Ovary (tissue), 10 donors: ENCODE measurements at regions of chr17 and their contacts with region 1.

Region 1: DNA sequence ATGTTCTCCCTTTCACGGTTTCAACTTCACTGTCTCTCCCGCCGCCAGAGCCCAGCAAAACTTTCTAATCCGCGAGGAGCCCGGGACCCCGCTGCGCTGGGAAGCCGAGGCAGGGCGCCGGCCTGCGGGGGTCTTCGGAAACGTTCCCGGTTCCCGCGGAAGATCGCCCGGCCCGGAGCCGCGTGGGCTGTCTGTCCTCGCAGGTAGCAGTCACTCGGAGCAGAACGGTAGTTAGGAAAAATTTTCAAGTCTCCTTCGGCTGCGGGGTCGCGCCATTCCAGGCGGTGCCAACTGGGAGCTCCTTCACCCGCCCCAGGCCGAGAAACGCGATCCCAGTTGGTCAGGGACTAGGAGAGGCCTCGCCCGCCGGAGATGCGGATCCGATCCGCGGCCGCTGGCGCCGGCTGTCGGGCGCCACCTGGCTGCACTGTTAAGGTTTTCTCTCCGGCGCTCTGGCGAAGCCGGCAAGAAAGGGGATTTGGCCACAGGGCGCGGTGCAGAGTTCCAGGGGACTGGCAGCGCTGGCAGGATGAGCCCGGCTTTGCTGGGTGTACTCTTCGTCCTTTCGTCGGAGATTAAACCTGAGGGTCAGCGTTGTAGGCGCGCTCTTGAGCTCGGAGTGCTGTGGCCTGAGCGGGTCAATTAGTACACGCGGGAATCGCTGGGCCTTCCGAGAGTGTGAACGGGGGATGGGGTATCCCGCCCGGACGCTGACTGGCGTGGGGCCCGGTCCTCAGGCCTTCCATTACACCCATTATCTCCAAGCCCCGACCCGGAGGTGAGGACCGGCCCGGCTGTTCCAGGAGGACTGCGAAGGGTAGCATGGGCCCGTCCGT is 135.4 kb downstream of the KCNJ12 start:
- DNase-seq: peak; percentile 76 to 89 (median 80)
- H3K4me3 ChIP-seq: peak overlapping the region; percentile 45
- H3K27ac ChIP-seq: peak overlapping the region; percentile 26 to 28
- H3K4me1 ChIP-seq: peaks cover 5% of the 10 kb centered on the region
- H3K27me3 ChIP-seq: no peaks in the 10 kb centered on the region
- CTCF ChIP-seq: peak; percentile 49 to 78 (median 64)
- EP300 ChIP-seq: no peak
- POLR2A ChIP-seq: no peak

Region 2: DNA sequence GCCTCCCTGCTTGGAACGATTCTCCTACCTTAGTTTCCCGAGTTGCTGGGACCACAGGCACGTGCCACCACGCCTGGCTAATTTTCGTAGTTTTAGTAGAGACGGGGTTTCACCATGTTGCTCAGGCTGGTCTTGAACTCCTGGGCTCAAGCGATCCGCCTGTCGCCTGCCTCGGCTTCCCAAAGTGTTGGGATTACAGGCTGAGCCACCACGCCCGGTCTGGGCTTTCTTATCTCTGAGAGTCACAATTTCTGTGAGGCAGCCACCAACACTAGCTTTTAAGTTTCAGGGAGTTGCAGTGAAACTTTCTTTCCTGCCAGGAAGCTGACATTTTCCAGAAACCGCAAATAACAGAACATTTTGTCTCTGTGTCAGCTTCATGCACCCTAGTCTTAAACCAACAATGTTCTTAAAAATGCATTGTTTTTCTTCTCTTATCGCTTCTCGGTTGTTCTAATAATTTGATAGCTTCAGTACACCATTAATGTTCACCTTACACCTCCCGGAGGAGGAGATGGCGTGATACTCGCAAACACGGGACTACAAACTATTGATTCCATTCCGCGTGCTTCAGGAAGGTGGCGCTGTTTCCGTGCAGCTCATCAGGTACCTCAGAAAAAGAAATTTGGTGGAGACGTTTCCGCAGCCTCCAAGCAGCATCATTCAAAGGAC is 392.2 kb before region 1 on chr17:
- intact Hi-C with region 1: loop called in 3 of 4 experiments (anchors 2 to 10 kb)
- DNase-seq: peak; percentile 59 to 75 (median 65)
- H3K4me3 ChIP-seq: no peak overlapping the region
- H3K27ac ChIP-seq: no peak overlapping the region
- H3K4me1 ChIP-seq: no peaks in the 10 kb centered on the region
- H3K27me3 ChIP-seq: no peaks in the 10 kb centered on the region
- CTCF ChIP-seq: peak; percentile 38 to 80 (median 57)
- EP300 ChIP-seq: no peak
- POLR2A ChIP-seq: no peak

Region 3: GRCh38 chr17:21126645-21127510 is 384.7 kb before region 1 on chr17 and contains the start of gene DHRS7B:
- intact Hi-C with region 1: loop called in 1 of 4 experiments (anchors 10 kb)
- DNase-seq: peak; percentile 93 to 96 (median 95)
- H3K4me3 ChIP-seq: peak within 1 kb of the TSS; percentile 78
- H3K27ac ChIP-seq: peak within 1 kb of the TSS; percentile 18 to 56
- H3K4me1 ChIP-seq: peaks cover 3% of the 10 kb centered on the region
- H3K27me3 ChIP-seq: no peaks in the 10 kb centered on the region
- CTCF ChIP-seq: no peak
- EP300 ChIP-seq: no peak
- POLR2A ChIP-seq: peak; percentile 41
- total RNA-seq, gene DHRS7B: 10.7 to 27.9 (median 13.6) TPM

Region 4: DNA sequence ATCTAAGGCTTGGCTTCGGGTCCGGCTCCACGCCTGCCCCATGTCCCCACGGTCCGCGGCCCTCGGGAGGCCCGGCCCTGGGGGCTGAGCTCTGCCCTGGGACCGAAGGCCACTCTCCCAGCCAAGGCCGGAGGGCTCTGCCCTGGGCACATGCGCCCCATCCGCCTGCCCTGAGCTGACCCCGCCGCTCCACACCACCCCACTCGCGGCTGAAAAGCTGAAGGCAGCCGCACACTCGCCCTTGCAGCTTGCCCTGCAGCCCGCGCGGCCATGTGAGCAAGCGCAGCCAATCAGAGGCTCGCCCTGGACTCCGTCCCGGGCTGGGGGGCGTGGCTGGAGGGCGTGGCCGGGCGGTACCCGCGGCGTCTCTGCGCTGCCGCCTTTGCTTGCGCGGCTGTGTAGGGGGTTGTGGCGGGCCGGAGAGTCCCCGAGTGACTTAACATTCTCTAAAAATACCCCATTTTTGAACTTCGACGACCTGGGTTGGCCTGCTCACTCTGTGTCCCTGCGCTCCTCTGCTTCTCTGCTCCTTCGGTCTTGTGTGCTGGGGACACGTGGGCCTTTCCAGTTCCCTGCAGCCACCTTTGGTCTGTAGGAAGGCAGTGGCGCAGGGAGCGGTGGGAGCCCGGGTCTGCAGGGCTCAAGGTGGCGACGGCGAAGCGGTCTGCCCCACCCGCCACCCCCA is 235.9 kb before region 1 on chr17:
- intact Hi-C with region 1: loop called (anchors 5 to 10 kb)
- DNase-seq: peak; percentile 87 to 95 (median 93)
- H3K4me3 ChIP-seq: peak overlapping the region; percentile 67
- H3K27ac ChIP-seq: peak overlapping the region in 1 of 2 donors; percentile 40
- H3K4me1 ChIP-seq: no peaks in the 10 kb centered on the region
- H3K27me3 ChIP-seq: no peaks in the 10 kb centered on the region
- CTCF ChIP-seq: peak in 1 of 3 donors; percentile 19
- EP300 ChIP-seq: no peak
- POLR2A ChIP-seq: no peak

Region 5: DNA sequence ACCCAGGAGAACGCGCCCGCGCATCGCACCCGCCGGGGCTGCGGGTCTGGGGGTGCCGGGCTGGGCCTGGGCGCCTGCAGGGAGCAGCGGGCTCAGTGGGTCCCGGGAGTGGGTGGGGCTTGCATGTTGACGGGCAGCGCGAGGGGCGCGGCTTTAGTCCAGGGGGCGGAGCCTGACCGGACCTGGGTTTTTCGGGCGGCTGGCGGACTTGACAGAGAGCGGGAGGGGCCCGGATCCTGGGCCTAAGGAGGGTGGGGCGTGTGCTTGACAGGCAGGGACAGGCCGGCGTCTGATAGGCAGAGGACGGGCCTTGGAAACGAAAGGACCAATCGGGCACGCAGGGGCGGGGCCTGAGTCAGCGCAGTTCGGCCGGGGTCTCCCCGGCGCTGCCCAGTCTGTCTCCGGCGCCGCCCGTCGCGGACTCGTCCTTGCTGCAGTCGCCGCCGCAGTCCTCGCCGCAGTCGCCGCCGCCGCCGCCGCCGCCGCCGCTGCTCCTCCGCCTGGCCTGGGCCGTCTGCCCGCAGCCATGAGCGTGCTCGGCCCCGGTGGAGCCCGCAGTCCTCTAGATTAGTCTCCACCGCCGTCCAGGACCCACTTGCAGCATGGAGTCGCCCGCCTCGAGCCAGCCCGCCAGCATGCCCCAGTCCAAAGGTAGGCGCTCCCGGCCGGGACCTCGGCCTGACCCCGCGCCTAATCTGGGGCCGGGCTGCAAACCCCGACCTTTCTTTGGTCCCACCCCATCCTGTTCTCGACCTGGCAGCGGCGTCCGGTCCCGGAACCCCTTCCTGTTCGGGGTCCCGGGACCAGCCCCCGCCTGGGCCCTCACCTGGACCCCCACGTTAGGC is 227.0 kb before region 1 on chr17 and contains the start of gene MAP2K3:
- intact Hi-C with region 1: loop called (anchors 5 to 10 kb)
- DNase-seq: peak; percentile 99
- H3K4me3 ChIP-seq: peak within 1 kb of the TSS; percentile 57
- H3K27ac ChIP-seq: peak within 1 kb of the TSS; percentile 1 to 65
- H3K4me1 ChIP-seq: peaks cover 24% of the 10 kb centered on the region
- H3K27me3 ChIP-seq: no peaks in the 10 kb centered on the region
- CTCF ChIP-seq: no peak
- EP300 ChIP-seq: no peak
- POLR2A ChIP-seq: peak; percentile 80
- total RNA-seq, gene MAP2K3: 9.1 to 45.5 (median 18.9) TPM

Region 6: DNA sequence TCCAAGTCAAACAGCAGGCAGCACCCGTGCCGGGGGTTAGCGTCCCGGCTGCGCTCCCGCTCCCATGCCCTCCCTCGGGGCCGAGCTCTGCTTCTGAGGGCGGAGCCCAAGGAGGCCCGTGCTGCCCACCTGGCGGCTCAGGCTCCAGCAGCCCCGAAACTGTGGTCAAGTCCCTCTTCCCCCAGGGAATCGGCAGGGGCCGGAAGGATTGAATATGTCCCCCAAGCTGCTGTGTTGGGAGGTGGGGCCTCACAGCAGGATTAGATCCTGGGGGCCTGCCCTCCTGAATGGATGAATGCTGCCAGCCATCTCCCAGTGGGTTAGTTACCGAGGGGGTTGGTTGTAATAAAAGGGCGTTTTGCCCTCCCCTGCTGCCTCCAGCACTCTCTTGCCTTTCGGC is 193.1 kb before region 1 on chr17:
- intact Hi-C with region 1: loop called in 1 of 4 experiments (anchors 10 kb)
- DNase-seq: peak in 3 of 5 donors; percentile 9 to 37 (median 31)
- H3K4me3 ChIP-seq: no peak overlapping the region
- H3K27ac ChIP-seq: no peak overlapping the region
- H3K4me1 ChIP-seq: no peaks in the 10 kb centered on the region
- H3K27me3 ChIP-seq: no peaks in the 10 kb centered on the region
- CTCF ChIP-seq: no peak
- EP300 ChIP-seq: no peak
- POLR2A ChIP-seq: no peak

Region 7: GRCh38 chr17:21457051-21458026 is 54.2 kb before region 1 on chr17:
- intact Hi-C with region 1: loop called in 3 of 4 experiments (anchors 2 to 5 kb)
- DNase-seq: peak; percentile 74 to 91 (median 78)
- H3K4me3 ChIP-seq: no peak overlapping the region
- H3K27ac ChIP-seq: no peak overlapping the region
- H3K4me1 ChIP-seq: peaks cover 3% of the 10 kb centered on the region
- H3K27me3 ChIP-seq: no peaks in the 10 kb centered on the region
- CTCF ChIP-seq: peak; percentile 23 to 61 (median 24)
- EP300 ChIP-seq: no peak
- POLR2A ChIP-seq: no peak